CD4-positive, alpha-beta T cell (primary cell): ENCODE measurements at regions of chr20 and their contacts with region 1.

Region 1: GRCh38 chr20:62386383-62387218 is at the start of gene RPS21:
- DNase-seq: peak; percentile 89 to 97 (median 92)
- ATAC-seq: peak; percentile 87
- H3K4me3 ChIP-seq: peak within 1 kb of the TSS; percentile 91
- H3K4me3 Mint-ChIP-seq: peak within 1 kb of the TSS; percentile 95
- H3K27ac ChIP-seq: peak within 1 kb of the TSS; percentile 84 to 94
- H3K27ac Mint-ChIP-seq: peak within 1 kb of the TSS; percentile 91
- H3K4me1 ChIP-seq: peaks cover 39% of the 10 kb centered on the region
- H3K4me1 Mint-ChIP-seq: peaks cover 58% of the 10 kb centered on the region
- H3K27me3 ChIP-seq: no peaks in the 10 kb centered on the region
- H3K27me3 Mint-ChIP-seq: no peaks in the 10 kb centered on the region
- CTCF ChIP-seq: no peak
- total RNA-seq, gene RPS21: 3,015 to 3,210 TPM

Region 2: DNA sequence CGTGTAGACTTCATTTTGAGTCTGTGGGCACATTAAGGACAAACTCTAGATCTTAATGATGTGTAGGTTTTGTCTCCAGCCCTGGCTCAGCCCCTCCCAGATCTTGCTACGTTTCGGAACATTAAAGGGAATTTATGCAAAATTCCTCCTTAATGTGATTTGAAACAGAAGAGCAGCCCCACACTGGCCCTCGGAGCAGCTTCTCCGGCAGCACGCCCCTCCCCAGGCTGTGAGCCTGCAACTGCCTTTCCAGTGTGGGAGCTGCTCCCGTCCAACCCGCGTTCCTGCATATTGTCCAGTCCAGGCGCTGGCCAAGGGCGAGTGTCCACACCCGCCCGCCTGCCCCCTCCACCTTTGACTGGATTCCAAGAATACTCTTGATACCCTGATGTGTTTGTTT is 578.2 kb before region 1 on chr20:
- CTCF ChIA-PET with region 1: no interaction called
- POLR2A ChIA-PET with region 1: no interaction called
- intact Hi-C with region 1: no loop called
- DNase-seq: no peak
- ATAC-seq: no peak
- H3K4me3 ChIP-seq: no peak overlapping the region
- H3K4me3 Mint-ChIP-seq: no peak overlapping the region
- H3K27ac ChIP-seq: no peak overlapping the region
- H3K27ac Mint-ChIP-seq: no peak overlapping the region
- H3K4me1 ChIP-seq: no peaks in the 10 kb centered on the region
- H3K4me1 Mint-ChIP-seq: no peaks in the 10 kb centered on the region
- H3K27me3 ChIP-seq: no peaks in the 10 kb centered on the region
- H3K27me3 Mint-ChIP-seq: peaks cover 5% of the 10 kb centered on the region
- CTCF ChIP-seq: no peak

Region 3: GRCh38 chr20:62143118-62143973 is 243.3 kb before region 1 on chr20 and contains the starts of genes PSMA7 and SS18L1:
- CTCF ChIA-PET with region 1: no interaction called
- POLR2A ChIA-PET with region 1: interaction called, 3 read pairs
- intact Hi-C with region 1: loop called in 1 of 2 experiments (anchors 2 kb)
- DNase-seq: peak; percentile 71 to 98 (median 83)
- ATAC-seq: peak; percentile 83
- H3K4me3 ChIP-seq: peak within 1 kb of the TSS; percentile 65
- H3K4me3 Mint-ChIP-seq: peak within 1 kb of the TSS; percentile 95
- H3K27ac ChIP-seq: peak within 1 kb of the TSS; percentile 53 to 75
- H3K27ac Mint-ChIP-seq: peak within 1 kb of the TSS; percentile 96
- H3K4me1 ChIP-seq: peaks cover 49% of the 10 kb centered on the region
- H3K4me1 Mint-ChIP-seq: peaks cover 51% of the 10 kb centered on the region
- H3K27me3 ChIP-seq: no peaks in the 10 kb centered on the region
- H3K27me3 Mint-ChIP-seq: no peaks in the 10 kb centered on the region
- CTCF ChIP-seq: no peak
- total RNA-seq, gene PSMA7: 150 to 158 TPM
- total RNA-seq, gene SS18L1: 12.8 to 13.4 TPM

Region 4: GRCh38 chr20:62165762-62166399 is 220.7 kb before region 1 on chr20:
- CTCF ChIA-PET with region 1: no interaction called
- POLR2A ChIA-PET with region 1: no interaction called
- intact Hi-C with region 1: no loop called
- DNase-seq: no peak
- ATAC-seq: no peak
- H3K4me3 ChIP-seq: no peak overlapping the region
- H3K4me3 Mint-ChIP-seq: no peak overlapping the region
- H3K27ac ChIP-seq: no peak overlapping the region
- H3K27ac Mint-ChIP-seq: no peak overlapping the region
- H3K4me1 ChIP-seq: no peaks in the 10 kb centered on the region
- H3K4me1 Mint-ChIP-seq: no peaks in the 10 kb centered on the region
- H3K27me3 ChIP-seq: no peaks in the 10 kb centered on the region
- H3K27me3 Mint-ChIP-seq: no peaks in the 10 kb centered on the region
- CTCF ChIP-seq: no peak

Region 5: DNA sequence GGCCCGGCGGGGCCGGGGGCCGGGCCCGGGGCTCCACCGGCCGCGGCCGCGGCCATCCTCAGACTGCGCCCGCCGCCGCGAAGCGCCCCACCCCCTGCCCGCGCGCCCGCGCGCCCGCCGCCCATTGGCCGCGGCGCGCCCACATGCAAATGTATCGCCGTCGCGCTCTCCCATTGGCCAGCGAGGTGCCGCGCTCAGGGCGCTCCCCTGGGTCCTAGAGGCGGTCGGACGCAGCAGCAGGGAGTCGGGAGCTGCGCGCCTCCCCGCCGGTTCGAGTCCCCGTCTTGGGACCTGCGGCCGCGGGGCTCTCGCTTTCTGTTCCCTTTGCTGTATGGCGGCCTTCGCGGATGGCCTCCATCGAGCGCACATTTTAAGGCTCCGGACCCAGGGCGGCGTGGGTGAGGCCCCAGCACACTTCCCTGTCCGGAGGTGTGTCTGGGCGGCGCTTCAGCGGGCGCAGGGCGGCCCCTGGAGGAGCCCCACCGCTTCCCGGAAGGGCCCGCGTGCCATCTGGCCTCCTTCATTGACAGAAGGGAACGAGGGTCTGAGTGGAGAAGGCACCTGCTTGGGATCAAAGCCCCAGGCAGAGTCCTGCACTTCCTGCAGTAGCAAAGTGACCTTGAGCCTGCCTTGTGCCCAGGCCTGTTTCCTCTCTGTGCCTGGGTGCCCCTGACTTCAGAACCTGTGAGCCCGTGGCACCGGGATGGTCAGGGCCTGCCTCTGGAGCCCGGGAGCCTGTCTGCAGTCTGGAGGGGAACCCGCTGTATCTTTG is 20.8 kb after region 1 on chr20 and contains the start of gene CABLES2:
- CTCF ChIA-PET with region 1: interaction called, 9 read pairs
- POLR2A ChIA-PET with region 1: interaction called, 5 read pairs
- intact Hi-C with region 1: loop called in 1 of 2 experiments (anchors 1 kb)
- DNase-seq: peak; percentile 83 to 96 (median 88)
- ATAC-seq: peak; percentile 95
- H3K4me3 ChIP-seq: peak within 1 kb of the TSS; percentile 72
- H3K4me3 Mint-ChIP-seq: peak within 1 kb of the TSS; percentile 84
- H3K27ac ChIP-seq: peak within 1 kb of the TSS in 1 of 2 donors; percentile 24
- H3K27ac Mint-ChIP-seq: no peak within 1 kb of the TSS
- H3K4me1 ChIP-seq: peaks cover 46% of the 10 kb centered on the region
- H3K4me1 Mint-ChIP-seq: peaks cover 18% of the 10 kb centered on the region
- H3K27me3 ChIP-seq: no peaks in the 10 kb centered on the region
- H3K27me3 Mint-ChIP-seq: no peaks in the 10 kb centered on the region
- CTCF ChIP-seq: no peak
- total RNA-seq, gene CABLES2: 4.4 TPM

Region 6: GRCh38 chr20:62595491-62595890 is 208.9 kb after region 1 on chr20:
- CTCF ChIA-PET with region 1: no interaction called
- POLR2A ChIA-PET with region 1: no interaction called
- intact Hi-C with region 1: no loop called
- DNase-seq: peak in 3 of 14 experiments; percentile 15 to 50 (median 29)
- ATAC-seq: no peak
- H3K4me3 ChIP-seq: no peak overlapping the region
- H3K4me3 Mint-ChIP-seq: no peak overlapping the region
- H3K27ac ChIP-seq: no peak overlapping the region
- H3K27ac Mint-ChIP-seq: no peak overlapping the region
- H3K4me1 ChIP-seq: peaks cover 8% of the 10 kb centered on the region
- H3K4me1 Mint-ChIP-seq: no peaks in the 10 kb centered on the region
- H3K27me3 ChIP-seq: peaks cover 31 to 39% of the 10 kb centered on the region in 2 experiments
- H3K27me3 Mint-ChIP-seq: peaks cover 63% of the 10 kb centered on the region
- CTCF ChIP-seq: no peak